Activated CD8-positive, alpha-beta T cell treated with anti-CD3 and anti-CD28 coated beads, Interleukin-2, amount 10 ng/mL, durations not matched to agents 7 days and 5 days (primary cell): ENCODE measurements at regions of chr2 and their contacts with region 1.

Region 1: GRCh38 chr2:70861777-70862625 is 26.4 kb upstream of the CD207 start:
- DNase-seq: peak; percentile 78
- ATAC-seq: peak; percentile 90
- H3K4me3 Mint-ChIP-seq: no peak overlapping the region
- H3K27ac Mint-ChIP-seq: no peak overlapping the region
- H3K4me1 Mint-ChIP-seq: peaks cover 3% of the 10 kb centered on the region
- H3K27me3 Mint-ChIP-seq: peaks cover 52% of the 10 kb centered on the region

Region 2: DNA sequence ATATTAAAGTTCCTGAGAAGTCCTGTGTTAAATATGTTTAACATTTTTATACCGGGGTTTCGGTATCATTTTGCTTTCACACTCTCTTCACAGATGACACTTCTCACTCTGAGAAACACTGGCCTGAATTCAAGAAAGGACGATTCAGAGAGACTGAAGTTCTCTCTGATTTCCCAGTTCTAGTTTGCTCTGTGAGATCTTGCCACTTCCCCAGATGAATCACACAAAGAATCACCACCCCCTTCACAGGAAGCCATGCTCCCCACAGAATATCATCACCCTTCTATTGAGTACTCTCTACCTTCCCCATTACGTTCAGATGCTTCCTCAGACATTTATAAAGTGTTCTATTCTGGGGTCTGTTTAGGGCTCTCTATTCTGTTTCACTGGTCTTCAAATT is 10.3 kb before region 1 on chr2:
- CTCF ChIA-PET with region 1: interaction called, 21 read pairs
- POLR2A ChIA-PET with region 1: no interaction called
- DNase-seq: peak; percentile 55
- ATAC-seq: peak; percentile 99
- H3K4me3 Mint-ChIP-seq: peak overlapping the region; percentile 26
- H3K27ac Mint-ChIP-seq: peak overlapping the region; percentile 78
- H3K4me1 Mint-ChIP-seq: peaks cover 31% of the 10 kb centered on the region
- H3K27me3 Mint-ChIP-seq: peaks cover 3% of the 10 kb centered on the region

Region 3: GRCh38 chr2:70954886-70955285 is 92.9 kb after region 1 on chr2:
- CTCF ChIA-PET with region 1: no interaction called
- POLR2A ChIA-PET with region 1: no interaction called
- DNase-seq: peak; percentile 13
- ATAC-seq: no peak
- H3K4me3 Mint-ChIP-seq: no peak overlapping the region
- H3K27ac Mint-ChIP-seq: no peak overlapping the region
- H3K4me1 Mint-ChIP-seq: peaks cover 24% of the 10 kb centered on the region
- H3K27me3 Mint-ChIP-seq: peaks cover 27% of the 10 kb centered on the region

Region 4: GRCh38 chr2:70984576-70985282 is 122.7 kb after region 1 on chr2:
- CTCF ChIA-PET with region 1: no interaction called
- POLR2A ChIA-PET with region 1: no interaction called
- DNase-seq: peak; percentile 86
- ATAC-seq: peak; percentile 99
- H3K4me3 Mint-ChIP-seq: peak overlapping the region; percentile 30
- H3K27ac Mint-ChIP-seq: peak overlapping the region; percentile 61
- H3K4me1 Mint-ChIP-seq: peaks cover 24% of the 10 kb centered on the region
- H3K27me3 Mint-ChIP-seq: no peaks in the 10 kb centered on the region